ENCODE measurements at regions of chr19 and their contacts with region 1.

Region 1: DNA sequence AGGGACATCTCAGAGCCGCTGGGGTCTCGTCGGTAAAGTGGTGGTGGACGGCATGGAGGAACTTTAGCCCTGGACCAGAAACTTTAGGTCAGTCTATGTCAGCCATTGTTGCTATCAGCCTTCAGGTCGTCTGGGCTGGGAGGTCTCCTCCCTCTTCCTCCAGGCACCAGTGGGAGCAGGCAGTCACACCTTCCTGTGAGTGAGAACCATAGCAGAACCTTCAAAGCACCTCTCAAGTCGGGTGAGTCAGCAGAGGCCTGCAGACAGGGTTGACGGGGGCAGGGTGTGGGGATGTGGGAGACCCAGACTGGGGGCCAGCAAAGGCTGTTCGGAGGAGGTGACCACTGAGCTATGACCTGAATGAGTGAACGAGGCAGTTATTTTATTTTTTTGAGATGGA is 15.4 kb upstream of the SBNO2 start:
- DNase-seq: no peak
- H3K4me3 Mint-ChIP-seq: no peak overlapping the region
- H3K27ac Mint-ChIP-seq: no peak overlapping the region
- H3K4me1 Mint-ChIP-seq: no peaks in the 10 kb centered on the region
- H3K27me3 Mint-ChIP-seq: no peaks in the 10 kb centered on the region
- CTCF ChIP-seq: no peak

Region 2: GRCh38 chr19:1057176-1057855 is 132.1 kb before region 1 on chr19:
- CTCF ChIA-PET with region 1: interaction called, 11 read pairs
- POLR2A ChIA-PET with region 1: no interaction called
- intact Hi-C with region 1: loop called (anchors 5 kb)
- DNase-seq: peak; percentile 65
- H3K4me3 Mint-ChIP-seq: no peak overlapping the region
- H3K27ac Mint-ChIP-seq: peak overlapping the region; percentile 63
- H3K4me1 Mint-ChIP-seq: no peaks in the 10 kb centered on the region
- H3K27me3 Mint-ChIP-seq: no peaks in the 10 kb centered on the region
- CTCF ChIP-seq: peak; percentile 53

Region 3: GRCh38 chr19:1113033-1113985 is 76.1 kb before region 1 on chr19:
- CTCF ChIA-PET with region 1: interaction called, 3 read pairs
- POLR2A ChIA-PET with region 1: no interaction called
- intact Hi-C with region 1: loop called (anchors 5 kb)
- DNase-seq: peak; percentile 89
- H3K4me3 Mint-ChIP-seq: no peak overlapping the region
- H3K27ac Mint-ChIP-seq: no peak overlapping the region
- H3K4me1 Mint-ChIP-seq: no peaks in the 10 kb centered on the region
- H3K27me3 Mint-ChIP-seq: no peaks in the 10 kb centered on the region
- CTCF ChIP-seq: peak; percentile 65

Region 4: DNA sequence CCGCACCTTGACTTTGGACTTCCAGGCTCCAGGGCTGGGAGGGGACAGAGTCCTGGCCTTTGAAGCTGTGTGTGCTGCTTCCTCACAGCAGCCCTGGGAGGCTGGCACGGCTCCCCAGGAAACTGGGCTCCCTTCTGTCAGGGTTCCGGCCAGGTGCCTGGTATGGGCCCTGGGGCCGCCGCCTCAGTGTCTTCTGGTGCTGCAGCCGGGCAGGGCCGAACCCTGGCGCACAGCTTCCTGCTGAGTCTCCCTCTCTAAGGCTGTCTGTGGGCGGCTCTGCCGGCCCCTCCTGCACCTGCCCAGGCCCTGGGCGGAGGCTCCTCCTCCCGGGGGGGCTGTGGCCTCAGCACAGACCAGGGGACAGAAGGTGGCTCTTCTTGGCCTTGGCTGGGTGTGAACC is 53.2 kb before region 1 on chr19:
- CTCF ChIA-PET with region 1: no interaction called
- POLR2A ChIA-PET with region 1: no interaction called
- intact Hi-C with region 1: no loop called
- DNase-seq: no peak
- H3K4me3 Mint-ChIP-seq: no peak overlapping the region
- H3K27ac Mint-ChIP-seq: peak overlapping the region; percentile 51
- H3K4me1 Mint-ChIP-seq: no peaks in the 10 kb centered on the region
- H3K27me3 Mint-ChIP-seq: no peaks in the 10 kb centered on the region
- CTCF ChIP-seq: no peak

Region 5: GRCh38 chr19:1205114-1206062 is 16.0 kb after region 1 on chr19 and contains the start of gene STK11:
- CTCF ChIA-PET with region 1: interaction called, 17 read pairs
- POLR2A ChIA-PET with region 1: no interaction called
- intact Hi-C with region 1: no loop called
- DNase-seq: peak; percentile 98
- H3K4me3 Mint-ChIP-seq: peak within 1 kb of the TSS; percentile 91
- H3K27ac Mint-ChIP-seq: peak within 1 kb of the TSS; percentile 94
- H3K4me1 Mint-ChIP-seq: peaks cover 15% of the 10 kb centered on the region
- H3K27me3 Mint-ChIP-seq: no peaks in the 10 kb centered on the region
- CTCF ChIP-seq: no peak
- total RNA-seq, gene STK11: 63.1 and 65.6 TPM in 2 replicates

Region 6: DNA sequence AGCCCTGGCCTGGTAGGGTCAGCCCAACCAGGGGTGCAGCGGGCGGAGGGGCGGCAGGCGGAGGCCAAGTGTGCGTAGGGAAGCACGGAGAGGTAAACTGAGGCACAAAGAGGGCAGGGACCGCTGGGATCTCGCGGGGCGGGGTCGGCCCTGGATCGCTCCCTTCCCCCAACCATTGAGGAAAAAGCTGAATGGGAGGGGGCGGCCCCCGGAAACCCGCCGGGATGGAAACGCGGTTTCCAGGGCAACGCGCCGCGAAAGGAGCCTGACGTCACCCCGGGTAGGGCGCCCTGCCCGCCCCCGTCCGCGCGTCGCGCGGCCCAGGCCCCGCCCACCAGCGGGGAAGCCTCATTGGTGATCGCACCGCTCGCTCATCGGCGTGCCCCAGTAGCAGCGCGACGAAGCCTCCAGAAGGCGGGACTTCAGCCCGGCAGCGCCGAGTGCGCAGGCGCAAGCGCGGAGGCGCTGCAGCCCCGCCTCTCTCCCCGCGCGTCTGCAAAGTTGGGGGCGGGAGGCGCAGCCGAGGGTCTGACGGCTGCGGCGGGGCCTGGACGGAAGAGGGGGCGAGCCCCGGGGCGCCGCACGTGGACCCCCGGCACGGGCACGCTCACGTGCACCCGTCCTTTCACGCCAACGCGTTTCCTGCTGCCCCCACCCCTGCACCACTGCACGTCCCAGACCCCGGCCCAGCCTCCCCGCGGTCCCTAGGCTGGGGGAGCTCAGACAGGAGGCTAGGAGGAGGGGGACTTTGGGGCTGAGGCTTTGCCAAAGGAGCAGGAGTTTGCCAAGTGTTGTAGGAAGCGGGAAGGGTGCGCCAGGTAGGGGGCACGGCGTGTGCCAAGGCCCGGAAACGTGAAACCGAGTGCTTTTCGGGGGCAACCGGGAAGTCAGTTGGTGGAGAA is 71.5 kb after region 1 on chr19:
- CTCF ChIA-PET with region 1: no interaction called
- POLR2A ChIA-PET with region 1: no interaction called
- intact Hi-C with region 1: no loop called
- DNase-seq: peak; percentile 96
- H3K4me3 Mint-ChIP-seq: peak overlapping the region; percentile 71
- H3K27ac Mint-ChIP-seq: peak overlapping the region; percentile 94
- H3K4me1 Mint-ChIP-seq: peaks cover 38% of the 10 kb centered on the region
- H3K27me3 Mint-ChIP-seq: no peaks in the 10 kb centered on the region
- CTCF ChIP-seq: no peak